Right lobe of liver (tissue), 6 donors: ENCODE measurements at regions of chr6 and their contacts with region 1.

Region 1: GRCh38 chr6:56637640-56638039 is 5.0 kb downstream of the DST start:
- DNase-seq: no peak
- ATAC-seq: peak; percentile 67 to 86 (median 80)
- H3K4me3 ChIP-seq: no peak overlapping the region
- H3K27ac ChIP-seq: no peak overlapping the region
- H3K4me1 ChIP-seq: peaks cover 0 to 9% (median 0%) of the 10 kb centered on the region in 4 donors
- H3K27me3 ChIP-seq: no peaks in the 10 kb centered on the region
- CTCF ChIP-seq: peak; percentile 59 to 69 (median 64)
- POLR2A ChIP-seq: no peak

Region 2: GRCh38 chr6:56459025-56459810 is 178.4 kb before region 1 on chr6:
- intact Hi-C with region 1: no loop called
- DNase-seq: no peak
- ATAC-seq: peak in 1 of 4 donors; percentile 13
- H3K4me3 ChIP-seq: no peak overlapping the region
- H3K27ac ChIP-seq: no peak overlapping the region
- H3K4me1 ChIP-seq: peaks cover 0 to under 1% (median 0%) of the 10 kb centered on the region in 4 donors
- H3K27me3 ChIP-seq: no peaks in the 10 kb centered on the region
- CTCF ChIP-seq: no peak
- POLR2A ChIP-seq: no peak

Region 3: GRCh38 chr6:56699066-56699654 is 61.5 kb after region 1 on chr6:
- intact Hi-C with region 1: loop called (anchors 10 kb)
- DNase-seq: no peak
- ATAC-seq: peak; percentile 69 to 74 (median 72)
- H3K4me3 ChIP-seq: no peak overlapping the region
- H3K27ac ChIP-seq: no peak overlapping the region
- H3K4me1 ChIP-seq: peaks cover 0 to 10% (median 2%) of the 10 kb centered on the region in 4 donors
- H3K27me3 ChIP-seq: no peaks in the 10 kb centered on the region
- CTCF ChIP-seq: peak; percentile 50 to 60 (median 57)
- POLR2A ChIP-seq: no peak

Region 4: GRCh38 chr6:56764081-56764566 is 126.5 kb after region 1 on chr6:
- intact Hi-C with region 1: loop called in 1 of 2 experiments (anchors 10 kb)
- DNase-seq: no peak
- ATAC-seq: peak; percentile 87 to 92 (median 91)
- H3K4me3 ChIP-seq: peak overlapping the region in 1 of 3 donors; percentile 18
- H3K27ac ChIP-seq: peak overlapping the region in 1 of 3 donors; percentile 48
- H3K4me1 ChIP-seq: peaks cover 0 to 6% (median 3%) of the 10 kb centered on the region in 4 donors
- H3K27me3 ChIP-seq: no peaks in the 10 kb centered on the region
- CTCF ChIP-seq: peak; percentile 26 to 57 (median 42)
- POLR2A ChIP-seq: no peak